ENCODE measurements at regions of chr14 and their contacts with region 1.

Region 1: DNA sequence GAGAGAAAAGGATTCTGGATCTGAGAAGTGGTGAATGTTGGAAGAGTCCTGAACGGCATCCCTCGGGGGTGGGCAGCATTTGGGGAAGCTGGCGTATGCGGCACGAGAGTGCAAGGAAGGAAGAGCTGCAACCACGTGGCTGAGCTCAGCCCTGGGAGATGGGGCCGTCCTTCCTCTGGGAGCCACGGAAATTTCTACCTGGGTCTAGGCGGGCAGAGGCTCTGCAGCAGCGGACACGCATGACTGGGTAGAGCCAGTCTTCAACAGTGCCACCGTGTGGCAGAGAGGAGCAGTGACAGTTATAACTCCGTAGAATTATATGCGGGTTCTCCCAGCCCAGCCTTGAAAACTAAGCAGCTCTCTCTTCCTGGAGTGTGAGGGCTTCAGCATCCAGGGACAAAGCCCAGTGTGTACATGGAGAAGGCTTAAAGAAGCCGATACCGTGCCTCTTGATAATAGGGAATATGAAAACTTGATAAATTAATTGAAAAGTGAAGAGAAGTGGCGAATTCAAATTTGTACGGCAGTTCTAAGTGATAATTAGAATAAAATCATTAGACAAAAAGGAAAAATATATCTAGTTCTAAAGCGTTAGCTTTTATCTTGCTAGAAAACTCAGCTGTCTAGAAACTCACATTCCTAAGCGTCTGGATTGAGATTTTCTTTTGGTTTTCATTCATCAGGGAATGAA is 82.9 kb upstream of the STXBP6 start:
- DNase-seq: peak; percentile 45 to 89
- H3K4me3 ChIP-seq: no peak overlapping the region
- CTCF ChIP-seq: peak in 2 of 3 donors; percentile 17 to 61
- POLR2A ChIP-seq: no peak

Region 2: DNA sequence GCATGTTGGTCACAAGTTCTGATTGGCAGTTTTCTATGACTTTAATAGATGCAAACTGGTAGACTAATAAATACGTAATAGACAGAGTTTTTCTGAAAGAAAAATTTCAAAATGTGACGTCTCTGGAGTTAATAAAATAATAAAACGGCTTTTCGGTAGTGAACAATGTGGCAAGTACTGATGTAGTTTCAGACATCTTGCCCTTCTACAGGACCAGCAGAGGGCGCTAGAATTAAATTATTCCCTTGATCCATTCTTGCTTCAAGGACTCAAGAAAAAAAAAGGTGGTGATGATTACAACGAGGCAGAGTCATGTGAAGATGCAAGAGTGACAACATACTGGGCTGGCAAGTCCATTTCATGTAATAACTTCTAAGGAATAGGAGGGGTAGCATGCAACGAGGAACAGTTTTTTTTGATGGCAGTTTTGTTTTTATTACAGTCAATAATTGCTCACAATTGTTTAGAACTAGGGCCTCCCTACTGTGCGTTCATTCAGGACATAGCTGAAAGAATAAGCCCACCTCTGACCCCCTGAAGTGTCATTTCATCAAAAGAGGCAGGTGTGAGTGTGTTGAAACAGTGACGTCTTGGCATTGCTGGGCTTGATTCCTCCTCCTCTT is 397.9 kb before region 1 on chr14:
- intact Hi-C with region 1: loop called (anchors 10 kb)
- DNase-seq: peak in 1 of 2 donors; percentile 69
- H3K4me3 ChIP-seq: no peak overlapping the region
- CTCF ChIP-seq: no peak
- POLR2A ChIP-seq: no peak

Region 3: DNA sequence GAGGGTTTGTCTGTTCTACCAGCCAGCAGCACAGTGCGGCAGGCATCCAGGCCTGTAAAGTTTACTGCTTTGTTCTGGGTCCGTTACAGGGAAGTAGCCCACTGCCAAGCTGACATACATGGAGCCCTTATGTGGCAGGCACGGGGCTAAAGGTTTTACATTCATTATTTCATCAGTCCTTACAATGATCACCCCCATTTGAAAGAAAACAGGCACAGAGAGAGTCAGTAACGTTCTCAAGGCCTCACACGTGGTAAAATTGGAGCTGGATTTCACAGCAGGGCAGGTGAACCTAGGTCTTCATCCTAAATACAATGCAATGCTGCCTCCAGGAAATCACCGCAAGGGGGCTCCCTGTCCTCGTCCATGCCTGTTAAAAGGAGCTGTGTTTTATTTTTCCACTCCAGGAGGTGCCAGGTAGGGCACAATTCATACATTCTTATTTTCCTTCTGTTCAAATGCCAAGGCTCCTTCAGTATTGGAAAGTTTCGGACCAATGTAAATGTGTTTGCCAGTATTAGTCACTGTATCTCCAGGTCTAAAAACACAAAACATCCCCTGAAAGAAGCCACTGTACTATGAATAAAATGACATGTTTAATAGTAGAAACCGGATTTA is 326.7 kb before region 1 on chr14:
- intact Hi-C with region 1: loop called (anchors 5 kb)
- DNase-seq: peak; percentile 52 to 91
- H3K4me3 ChIP-seq: no peak overlapping the region
- CTCF ChIP-seq: peak in 1 of 3 donors; percentile 22
- POLR2A ChIP-seq: no peak

Region 4: DNA sequence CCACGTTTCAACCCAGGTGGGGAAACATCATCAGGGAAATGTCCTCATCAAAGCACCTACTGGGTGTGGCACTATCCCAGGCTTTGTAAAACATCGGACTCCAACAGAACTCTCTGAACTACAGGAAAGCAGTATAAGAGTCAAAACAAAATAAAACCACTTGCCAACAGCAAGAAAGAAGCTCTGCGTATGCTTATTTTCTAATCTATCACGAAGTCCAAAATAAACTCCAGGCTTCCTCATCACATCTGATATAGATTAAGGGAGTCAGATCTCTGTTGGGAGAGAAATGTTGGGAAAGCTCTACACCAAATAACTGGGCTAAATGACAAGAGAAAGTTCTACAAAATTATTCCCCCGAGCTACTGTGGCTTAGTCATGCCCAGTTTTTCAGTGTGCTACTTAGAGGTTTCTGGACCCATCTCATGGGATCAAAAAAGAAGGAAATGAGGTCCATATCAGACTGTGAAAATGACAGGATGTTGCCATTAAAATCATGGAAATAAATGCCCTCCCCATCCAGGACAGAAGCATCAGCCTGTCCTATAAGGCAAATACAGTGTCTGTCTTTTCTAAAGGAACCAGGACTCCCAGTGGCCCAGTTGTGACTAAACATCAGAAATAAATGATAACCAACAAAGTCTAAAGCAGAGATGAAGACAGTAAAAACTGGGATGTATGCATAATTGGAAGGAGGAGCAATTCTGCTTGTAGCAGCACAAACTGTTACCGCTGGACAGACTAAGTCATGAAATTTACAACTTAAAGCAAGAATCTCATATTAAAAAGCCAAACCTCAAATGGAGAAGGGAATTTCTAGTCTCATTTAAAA is 232.4 kb before region 1 on chr14:
- intact Hi-C with region 1: no loop called
- DNase-seq: no peak
- H3K4me3 ChIP-seq: no peak overlapping the region
- CTCF ChIP-seq: no peak
- POLR2A ChIP-seq: no peak

Region 5: GRCh38 chr14:25111061-25111601 is 21.7 kb before region 1 on chr14:
- intact Hi-C with region 1: no loop called
- DNase-seq: peak in 1 of 2 donors; percentile 59
- H3K4me3 ChIP-seq: no peak overlapping the region
- CTCF ChIP-seq: no peak
- POLR2A ChIP-seq: no peak

Region 6: GRCh38 chr14:25150934-25151790 is 18.3 kb after region 1 on chr14:
- intact Hi-C with region 1: no loop called
- DNase-seq: no peak
- H3K4me3 ChIP-seq: no peak overlapping the region
- CTCF ChIP-seq: no peak
- POLR2A ChIP-seq: no peak

Region 7: DNA sequence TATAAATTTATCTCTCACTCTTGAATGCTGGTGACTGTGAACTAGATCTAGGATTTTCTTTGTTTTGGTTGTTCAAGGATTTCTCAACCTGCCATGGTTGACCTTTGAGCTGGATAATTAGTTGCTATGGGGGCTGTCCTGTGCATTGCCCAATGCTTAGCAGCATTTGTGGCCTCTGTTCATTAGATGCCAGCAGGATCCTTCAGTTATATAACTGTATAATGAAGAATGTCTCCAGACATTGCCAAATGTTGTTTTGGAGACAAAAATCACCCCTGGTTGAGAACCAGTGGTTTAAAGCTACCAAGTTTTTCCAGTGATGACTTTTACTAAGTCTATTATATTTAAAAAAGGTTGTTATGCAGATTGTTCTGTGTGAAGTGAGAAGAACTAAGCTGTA is 65.0 kb after region 1 on chr14:
- intact Hi-C with region 1: no loop called
- DNase-seq: no peak
- H3K4me3 ChIP-seq: no peak overlapping the region
- CTCF ChIP-seq: no peak
- POLR2A ChIP-seq: no peak